ENCODE measurements at regions of chr2 and their contacts with region 1.

Region 1: GRCh38 chr2:97806738-97807618 is 93.6 kb downstream of the ZAP70 start:
- DNase-seq: peak; percentile 74
- H3K4me3 Mint-ChIP-seq: no peak overlapping the region
- H3K27ac Mint-ChIP-seq: no peak overlapping the region
- H3K4me1 Mint-ChIP-seq: no peaks in the 10 kb centered on the region
- H3K27me3 Mint-ChIP-seq: no peaks in the 10 kb centered on the region
- CTCF ChIP-seq: peak; percentile 97

Region 2: GRCh38 chr2:96895726-96896651 is 911.0 kb before region 1 on chr2:
- CTCF ChIA-PET with region 1: no interaction called
- POLR2A ChIA-PET with region 1: no interaction called
- intact Hi-C with region 1: no loop called
- DNase-seq: peak; percentile 73
- H3K4me3 Mint-ChIP-seq: no peak overlapping the region
- H3K27ac Mint-ChIP-seq: no peak overlapping the region
- H3K4me1 Mint-ChIP-seq: peaks cover 51% of the 10 kb centered on the region
- H3K27me3 Mint-ChIP-seq: no peaks in the 10 kb centered on the region
- CTCF ChIP-seq: no peak

Region 3: DNA sequence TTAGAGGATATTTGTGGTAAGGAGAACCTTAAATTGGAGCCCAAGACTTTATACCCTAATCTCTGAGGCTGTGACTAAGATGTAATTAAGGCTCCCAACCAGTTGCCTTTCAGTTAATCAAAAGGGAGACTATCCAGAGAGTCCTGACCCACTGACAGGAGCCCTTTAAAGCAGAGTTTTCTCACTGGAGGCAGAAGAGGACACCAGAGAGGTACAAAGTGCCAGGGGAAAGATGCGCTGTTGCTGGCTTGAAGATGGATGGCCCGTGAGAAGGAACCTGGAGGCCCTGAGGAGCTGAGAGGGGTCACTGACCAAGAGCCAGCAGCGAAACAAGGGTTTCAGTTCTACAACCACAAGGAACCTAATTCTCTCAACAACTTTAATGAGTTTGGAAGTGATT is 51.5 kb after region 1 on chr2:
- CTCF ChIA-PET with region 1: no interaction called
- POLR2A ChIA-PET with region 1: no interaction called
- intact Hi-C with region 1: no loop called
- DNase-seq: no peak
- H3K4me3 Mint-ChIP-seq: no peak overlapping the region
- H3K27ac Mint-ChIP-seq: no peak overlapping the region
- H3K4me1 Mint-ChIP-seq: no peaks in the 10 kb centered on the region
- H3K27me3 Mint-ChIP-seq: no peaks in the 10 kb centered on the region
- CTCF ChIP-seq: no peak

Region 4: DNA sequence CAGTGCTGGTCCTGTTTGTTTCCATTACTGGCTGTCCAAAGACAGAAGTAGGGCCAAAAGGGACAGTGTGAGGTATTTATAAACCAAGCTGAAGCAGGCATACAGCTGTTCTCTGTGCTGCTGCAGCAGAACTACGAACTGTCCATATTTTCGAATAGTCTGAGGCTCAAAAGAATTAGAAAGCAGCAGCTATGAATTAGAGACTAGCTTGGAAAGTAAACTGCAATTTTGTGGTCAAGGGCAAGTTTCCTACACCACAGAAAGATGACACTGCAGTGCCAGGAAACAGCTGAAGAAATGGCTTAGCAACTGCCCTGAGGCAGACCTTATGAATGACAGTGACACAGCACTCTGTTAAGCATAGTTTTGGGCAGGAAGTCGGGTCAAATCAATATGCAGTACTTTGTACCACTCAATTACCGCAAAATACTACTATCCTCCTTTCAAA is 63.4 kb after region 1 on chr2:
- CTCF ChIA-PET with region 1: interaction called, 11 read pairs
- POLR2A ChIA-PET with region 1: interaction called, 5 read pairs
- intact Hi-C with region 1: loop called (anchors 5 kb)
- DNase-seq: peak; percentile 76
- H3K4me3 Mint-ChIP-seq: peak overlapping the region; percentile 51
- H3K27ac Mint-ChIP-seq: peak overlapping the region; percentile 70
- H3K4me1 Mint-ChIP-seq: peaks cover 26% of the 10 kb centered on the region
- H3K27me3 Mint-ChIP-seq: no peaks in the 10 kb centered on the region
- CTCF ChIP-seq: no peak

Region 5: GRCh38 chr2:97995734-97996624 is 189.0 kb after region 1 on chr2 and contains the start of gene TMEM131:
- CTCF ChIA-PET with region 1: interaction called, 6 read pairs
- POLR2A ChIA-PET with region 1: no interaction called
- intact Hi-C with region 1: loop called (anchors 1 kb)
- DNase-seq: peak; percentile 92
- H3K4me3 Mint-ChIP-seq: peak within 1 kb of the TSS; percentile 87
- H3K27ac Mint-ChIP-seq: peak within 1 kb of the TSS; percentile 75
- H3K4me1 Mint-ChIP-seq: peaks cover 22% of the 10 kb centered on the region
- H3K27me3 Mint-ChIP-seq: no peaks in the 10 kb centered on the region
- CTCF ChIP-seq: no peak
- total RNA-seq, gene TMEM131: 42.2 and 42.8 TPM in 2 replicates

Region 6: DNA sequence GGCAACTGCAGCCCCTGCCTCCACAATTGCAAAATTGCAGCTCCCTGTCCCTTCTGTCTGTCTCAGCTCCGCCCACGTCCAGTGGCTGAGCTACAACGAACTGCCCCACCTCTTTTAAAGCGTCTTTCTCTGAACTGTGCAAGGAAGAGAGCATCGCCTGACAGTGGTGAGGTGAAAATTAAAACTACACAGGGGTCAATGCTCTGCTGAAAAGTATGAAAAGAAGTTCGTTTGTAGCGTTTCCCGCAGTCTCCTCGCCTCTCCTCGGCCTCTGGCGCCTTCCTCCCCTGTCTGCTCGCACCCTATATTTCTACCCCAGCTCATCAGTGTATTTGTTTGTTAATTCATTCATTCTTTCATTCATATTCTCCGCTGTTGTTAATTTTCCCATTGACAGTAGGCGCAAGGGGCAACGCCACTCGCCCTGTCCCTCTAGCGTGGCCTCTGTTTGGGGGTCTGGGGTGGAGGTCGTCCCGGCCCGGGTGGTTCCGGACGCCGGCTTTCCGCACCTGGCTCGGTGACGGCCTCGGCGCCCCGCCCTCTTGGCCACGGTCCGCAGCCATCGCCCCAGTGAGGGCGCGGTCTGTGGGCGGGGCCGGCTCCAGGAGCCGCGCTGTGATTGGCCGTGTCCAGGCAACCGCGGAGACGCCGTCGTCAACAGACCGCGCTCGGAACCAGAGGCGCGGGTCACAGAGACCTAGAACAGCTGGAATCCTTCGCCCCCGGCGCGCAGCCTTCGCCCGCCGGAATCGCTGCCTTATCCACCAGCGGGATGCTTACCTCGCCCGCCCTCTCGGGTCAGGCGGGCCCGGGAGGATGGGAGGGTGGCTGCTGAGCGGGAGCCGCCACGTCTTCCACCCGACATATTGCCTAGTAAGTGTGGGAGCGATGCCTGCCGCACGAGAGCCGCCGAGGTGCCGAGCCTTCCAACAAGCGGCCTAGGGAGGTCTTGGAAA is 279.8 kb after region 1 on chr2 and contains the start of gene VWA3B:
- CTCF ChIA-PET with region 1: interaction called, 4 read pairs
- POLR2A ChIA-PET with region 1: no interaction called
- intact Hi-C with region 1: loop called (anchors 5 kb)
- DNase-seq: peak; percentile 66
- H3K4me3 Mint-ChIP-seq: peak within 1 kb of the TSS; percentile 68
- H3K27ac Mint-ChIP-seq: peak within 1 kb of the TSS; percentile 11
- H3K4me1 Mint-ChIP-seq: peaks cover 5% of the 10 kb centered on the region
- H3K27me3 Mint-ChIP-seq: peaks cover 17% of the 10 kb centered on the region
- CTCF ChIP-seq: no peak
- total RNA-seq, gene VWA3B: not detected in 2 replicates

Region 7: GRCh38 chr2:98188351-98189049 is 381.5 kb after region 1 on chr2:
- CTCF ChIA-PET with region 1: interaction called, 61 read pairs
- POLR2A ChIA-PET with region 1: interaction called, 4 read pairs
- intact Hi-C with region 1: loop called (anchors 1 kb)
- DNase-seq: peak; percentile 44
- H3K4me3 Mint-ChIP-seq: no peak overlapping the region
- H3K27ac Mint-ChIP-seq: no peak overlapping the region
- H3K4me1 Mint-ChIP-seq: no peaks in the 10 kb centered on the region
- H3K27me3 Mint-ChIP-seq: no peaks in the 10 kb centered on the region
- CTCF ChIP-seq: peak; percentile 32

Region 8: DNA sequence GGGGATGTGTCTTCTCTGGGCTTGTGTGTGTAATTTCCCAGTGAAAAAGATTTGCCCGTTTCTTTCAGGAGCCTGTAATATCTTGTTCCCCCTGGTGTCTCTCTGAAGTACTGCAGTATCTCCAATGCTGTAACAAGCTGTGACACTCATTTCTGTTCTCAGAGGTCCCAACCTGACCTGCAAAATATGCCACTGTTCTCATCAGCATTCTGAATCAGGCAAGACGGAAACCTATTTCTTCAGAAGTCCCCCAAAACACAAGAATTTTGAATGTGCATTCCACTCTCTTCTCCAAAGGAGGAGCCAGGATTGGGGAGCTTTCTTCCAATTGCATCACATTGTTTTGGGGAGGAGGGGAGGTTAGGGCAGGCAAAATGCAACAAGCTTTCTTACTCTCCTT is 462.3 kb after region 1 on chr2:
- CTCF ChIA-PET with region 1: interaction called, 34 read pairs
- POLR2A ChIA-PET with region 1: interaction called, 3 read pairs
- intact Hi-C with region 1: loop called (anchors 1 kb)
- DNase-seq: peak; percentile 63
- H3K4me3 Mint-ChIP-seq: no peak overlapping the region
- H3K27ac Mint-ChIP-seq: peak overlapping the region; percentile 13
- H3K4me1 Mint-ChIP-seq: peaks cover 13% of the 10 kb centered on the region
- H3K27me3 Mint-ChIP-seq: no peaks in the 10 kb centered on the region
- CTCF ChIP-seq: peak; percentile 66

Region 9: DNA sequence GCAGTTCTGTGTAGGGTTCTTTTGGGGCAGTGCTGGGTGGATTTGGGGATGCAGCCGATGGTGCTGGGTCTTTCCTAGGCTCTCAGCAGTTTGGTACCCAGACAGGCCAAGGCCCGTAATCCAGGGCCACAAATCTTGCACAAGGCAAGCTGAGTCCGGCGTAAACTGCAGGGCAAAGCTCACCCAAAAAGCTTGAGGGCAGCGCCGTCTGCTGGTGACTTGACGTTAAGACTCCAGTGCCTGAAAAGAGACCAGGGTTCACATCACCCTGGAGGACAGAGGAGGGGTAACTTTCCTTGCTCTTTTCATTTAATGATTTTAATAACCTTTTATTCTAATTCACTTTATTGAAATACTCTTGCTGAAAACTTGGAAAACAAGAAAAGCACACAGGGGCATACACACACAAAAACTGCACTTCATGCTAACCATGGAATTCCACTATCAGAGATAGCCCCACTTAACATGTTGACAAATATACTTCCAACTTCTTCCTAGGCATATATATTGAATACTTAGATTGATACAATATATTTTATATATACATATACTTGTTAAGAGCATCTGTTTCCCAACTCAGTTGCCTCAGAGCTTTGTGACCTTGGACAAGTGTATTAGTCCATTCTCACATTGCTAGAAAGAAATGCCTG is 578.2 kb after region 1 on chr2:
- CTCF ChIA-PET with region 1: interaction called, 24 read pairs
- POLR2A ChIA-PET with region 1: no interaction called
- intact Hi-C with region 1: loop called (anchors 1 kb)
- DNase-seq: peak; percentile 84
- H3K4me3 Mint-ChIP-seq: no peak overlapping the region
- H3K27ac Mint-ChIP-seq: no peak overlapping the region
- H3K4me1 Mint-ChIP-seq: peaks cover 4% of the 10 kb centered on the region
- H3K27me3 Mint-ChIP-seq: peaks cover 40% of the 10 kb centered on the region
- CTCF ChIP-seq: peak; percentile 95

Measured in MCF 10A (cell line).